Endothelial cell of umbilical vein (primary cell): ENCODE measurements at regions of chr1 and their contacts with region 1.

Region 1: DNA sequence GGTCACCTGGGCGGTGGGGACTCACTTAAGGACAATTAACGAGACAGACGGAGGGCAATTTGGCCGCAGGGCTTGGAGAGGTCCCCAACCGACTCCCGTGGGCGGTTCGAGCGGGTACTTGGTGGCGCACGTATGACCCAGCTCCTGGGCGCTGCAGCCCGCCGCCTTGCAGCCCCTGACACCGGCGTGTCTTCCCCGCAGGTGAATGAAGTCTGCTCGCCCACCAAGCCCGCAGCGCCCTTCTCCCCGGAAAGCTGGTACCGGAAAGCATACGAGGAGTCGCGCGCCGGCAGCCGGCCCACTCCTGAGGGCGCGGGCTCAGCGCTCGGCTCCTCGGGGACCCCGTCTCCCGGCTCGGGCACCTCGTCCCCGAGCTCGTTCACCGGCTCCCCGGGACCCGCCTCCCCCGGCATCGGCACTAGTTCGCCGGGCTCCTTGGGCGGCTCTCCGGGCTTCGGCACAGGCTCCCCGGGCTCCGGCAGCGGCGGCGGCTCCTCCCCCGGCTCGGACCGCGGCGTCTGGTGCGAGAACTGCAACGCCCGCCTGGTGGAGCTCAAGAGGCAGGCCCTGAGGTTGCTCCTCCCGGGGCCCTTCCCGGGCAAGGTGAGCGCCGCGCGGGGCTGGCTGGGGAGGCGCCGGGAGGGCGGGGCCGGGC is 1.4 kb downstream of the KIF26B start:
- DNase-seq: peak; percentile 60
- H3K4me3 ChIP-seq: peak overlapping the region; percentile 10 to 51 (median 45)
- H3K27ac ChIP-seq: no peak overlapping the region
- H3K4me1 ChIP-seq: peaks cover 28% of the 10 kb centered on the region
- H3K27me3 ChIP-seq: peaks cover 24 to 56% of the 10 kb centered on the region in 2 experiments
- CTCF ChIP-seq: peak; percentile 65 to 75
- POLR2A ChIP-seq: no peak

Region 2: DNA sequence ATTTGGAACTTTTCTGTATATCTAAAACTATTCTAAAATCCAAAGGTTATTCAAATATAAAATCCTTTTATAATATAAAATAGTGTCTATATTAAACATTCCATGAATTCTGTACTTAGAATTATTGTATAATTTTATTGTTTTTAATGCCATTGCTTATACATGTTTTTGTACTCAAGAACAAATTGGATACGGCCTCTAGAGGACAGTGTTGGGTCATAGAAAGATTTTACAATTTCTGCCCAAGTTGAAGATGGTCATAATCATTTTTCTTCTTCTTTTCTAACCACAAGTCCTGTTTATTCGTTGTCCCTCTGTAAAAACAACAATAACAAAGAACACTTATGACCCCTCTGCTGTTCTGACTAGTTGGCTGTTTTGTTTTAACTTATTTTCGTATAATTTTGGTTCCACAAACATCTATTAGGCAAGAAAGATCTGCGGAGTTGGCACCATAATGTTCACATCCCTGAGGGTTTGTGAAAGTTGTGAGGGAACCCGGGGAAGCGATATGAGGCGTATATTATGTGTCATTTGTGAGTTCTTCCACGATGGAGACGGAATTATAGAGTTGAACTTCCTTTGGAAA is 77.1 kb before region 1 on chr1:
- CTCF ChIA-PET with region 1: interaction called, 39 read pairs
- POLR2A ChIA-PET with region 1: no interaction called
- dilution Hi-C with region 1: no loop called
- intact Hi-C with region 1: loop called (anchors 1 kb)
- DNase-seq: peak; percentile 80
- H3K4me3 ChIP-seq: no peak overlapping the region
- H3K27ac ChIP-seq: no peak overlapping the region
- H3K4me1 ChIP-seq: no peaks in the 10 kb centered on the region
- H3K27me3 ChIP-seq: no peaks in the 10 kb centered on the region
- CTCF ChIP-seq: peak; percentile 36 to 58
- POLR2A ChIP-seq: no peak

Region 3: DNA sequence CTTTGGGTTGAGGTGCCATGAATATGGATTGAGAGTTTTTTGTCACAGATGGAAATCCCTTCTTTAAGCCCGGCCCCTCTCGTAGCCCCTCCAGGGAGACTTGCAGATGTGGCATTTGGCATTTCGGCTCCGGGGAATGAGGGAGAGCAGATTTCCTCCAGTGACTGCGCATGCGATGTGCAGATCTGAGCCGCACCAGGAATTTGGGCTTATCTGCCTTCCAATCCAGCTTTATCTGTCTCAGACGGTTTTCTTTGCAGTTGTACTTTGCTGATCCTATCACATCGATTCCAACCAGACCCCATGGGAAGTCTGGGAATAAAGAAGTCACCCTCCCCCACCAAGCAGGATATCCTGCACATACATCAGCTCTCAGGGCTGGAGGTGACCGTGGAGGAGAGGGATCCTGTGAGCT is 10.3 kb after region 1 on chr1:
- CTCF ChIA-PET with region 1: interaction called, 39 read pairs
- POLR2A ChIA-PET with region 1: no interaction called
- dilution Hi-C with region 1: no loop called
- intact Hi-C with region 1: no loop called
- DNase-seq: peak; percentile 18
- H3K4me3 ChIP-seq: peak overlapping the region in 1 of 3 experiments; percentile 3
- H3K27ac ChIP-seq: no peak overlapping the region
- H3K4me1 ChIP-seq: no peaks in the 10 kb centered on the region
- H3K27me3 ChIP-seq: peaks cover 8 to 11% of the 10 kb centered on the region in 2 experiments
- CTCF ChIP-seq: no peak
- POLR2A ChIP-seq: no peak

Region 4: GRCh38 chr1:245322673-245323441 is 166.6 kb after region 1 on chr1:
- CTCF ChIA-PET with region 1: no interaction called
- POLR2A ChIA-PET with region 1: no interaction called
- dilution Hi-C with region 1: no loop called
- intact Hi-C with region 1: no loop called
- DNase-seq: no peak
- H3K4me3 ChIP-seq: no peak overlapping the region
- H3K27ac ChIP-seq: no peak overlapping the region
- H3K4me1 ChIP-seq: no peaks in the 10 kb centered on the region
- H3K27me3 ChIP-seq: no peaks in the 10 kb centered on the region
- CTCF ChIP-seq: no peak
- POLR2A ChIP-seq: no peak

Region 5: GRCh38 chr1:245888809-245889208 is 732.6 kb after region 1 on chr1:
- CTCF ChIA-PET with region 1: interaction called, 24 read pairs
- POLR2A ChIA-PET with region 1: no interaction called
- dilution Hi-C with region 1: no loop called
- intact Hi-C with region 1: no loop called
- DNase-seq: peak; percentile 57
- H3K4me3 ChIP-seq: no peak overlapping the region
- H3K27ac ChIP-seq: no peak overlapping the region
- H3K4me1 ChIP-seq: no peaks in the 10 kb centered on the region
- H3K27me3 ChIP-seq: no peaks in the 10 kb centered on the region
- CTCF ChIP-seq: peak in 1 of 2 donors; percentile 48
- POLR2A ChIP-seq: no peak

Region 6: GRCh38 chr1:246117066-246117791 is 961.0 kb after region 1 on chr1:
- CTCF ChIA-PET with region 1: interaction called, 8 read pairs
- POLR2A ChIA-PET with region 1: no interaction called
- dilution Hi-C with region 1: no loop called
- intact Hi-C with region 1: loop called (anchors 1 kb)
- DNase-seq: peak; percentile 70
- H3K4me3 ChIP-seq: no peak overlapping the region
- H3K27ac ChIP-seq: no peak overlapping the region
- H3K4me1 ChIP-seq: peaks cover 7% of the 10 kb centered on the region
- H3K27me3 ChIP-seq: no peaks in the 10 kb centered on the region
- CTCF ChIP-seq: peak; percentile 17 to 46
- POLR2A ChIP-seq: no peak

Region 7: GRCh38 chr1:246450611-246451251 is 1294.5 kb after region 1 on chr1:
- CTCF ChIA-PET with region 1: interaction called, 11 read pairs
- POLR2A ChIA-PET with region 1: no interaction called
- dilution Hi-C with region 1: no loop called
- intact Hi-C with region 1: loop called (anchors 1 kb)
- DNase-seq: peak; percentile 53
- H3K4me3 ChIP-seq: no peak overlapping the region
- H3K27ac ChIP-seq: no peak overlapping the region
- H3K4me1 ChIP-seq: no peaks in the 10 kb centered on the region
- H3K27me3 ChIP-seq: no peaks in the 10 kb centered on the region
- CTCF ChIP-seq: peak; percentile 34 to 42
- POLR2A ChIP-seq: no peak

Region 8: GRCh38 chr1:246699095-246699735 is 1543.0 kb after region 1 on chr1:
- CTCF ChIA-PET with region 1: no interaction called
- POLR2A ChIA-PET with region 1: no interaction called
- dilution Hi-C with region 1: no loop called
- intact Hi-C with region 1: loop called (anchors 5 kb)
- DNase-seq: peak; percentile 93
- H3K4me3 ChIP-seq: no peak overlapping the region
- H3K27ac ChIP-seq: peak overlapping the region; percentile 53
- H3K4me1 ChIP-seq: peaks cover 5% of the 10 kb centered on the region
- H3K27me3 ChIP-seq: no peaks in the 10 kb centered on the region
- CTCF ChIP-seq: peak; percentile 91 to 92
- POLR2A ChIP-seq: no peak